PC-9 (cell line): ENCODE measurements at regions of chr21 and their contacts with region 1.

Region 1: DNA sequence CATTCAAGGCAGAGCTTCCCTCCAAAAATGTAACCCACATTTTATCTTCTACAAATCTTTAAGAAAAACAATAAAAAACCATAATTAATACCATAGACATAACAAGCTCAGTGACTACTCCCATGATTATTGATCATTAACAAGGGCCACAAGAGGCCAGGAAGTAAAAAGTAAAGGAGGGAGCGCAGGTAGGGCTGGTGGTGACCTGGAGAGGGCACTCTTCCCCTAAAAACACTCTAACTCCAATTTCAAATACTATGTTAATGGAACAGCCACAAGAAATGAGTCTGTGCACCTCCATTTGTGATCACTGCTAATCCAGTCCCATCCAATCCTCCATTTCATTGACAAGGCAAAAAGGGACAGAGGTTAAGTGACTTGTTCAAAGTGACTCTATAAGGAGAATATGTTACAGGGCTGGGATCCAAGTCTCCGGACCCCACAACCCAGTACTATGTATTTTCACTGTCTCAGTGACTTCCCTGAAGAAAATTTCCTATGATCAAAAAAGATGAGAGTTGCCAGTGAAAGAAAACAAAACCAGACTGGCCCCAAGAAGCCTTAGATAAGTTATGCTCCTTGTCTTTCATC is 41.2 kb upstream of the CFAP298 start:
- DNase-seq: no peak
- H3K4me3 ChIP-seq: no peak overlapping the region
- H3K27ac ChIP-seq: no peak overlapping the region
- H3K4me1 ChIP-seq: no peaks in the 10 kb centered on the region
- H3K27me3 ChIP-seq: no peaks in the 10 kb centered on the region
- CTCF ChIP-seq: peak; percentile 67

Region 2: GRCh38 chr21:32826329-32827167 is 173.1 kb after region 1 on chr21:
- CTCF ChIA-PET with region 1: interaction called, 3 read pairs
- POLR2A ChIA-PET with region 1: no interaction called
- intact Hi-C with region 1: loop called (anchors 5 kb)
- DNase-seq: peak in 1 of 2 experiments; percentile 7
- H3K4me3 ChIP-seq: no peak overlapping the region
- H3K27ac ChIP-seq: no peak overlapping the region
- H3K4me1 ChIP-seq: no peaks in the 10 kb centered on the region
- H3K27me3 ChIP-seq: no peaks in the 10 kb centered on the region
- CTCF ChIP-seq: peak; percentile 44; the same call in 1 of the 2 replicates